ENCODE measurements at regions of chr2 and their contacts with region 1.

Region 1: DNA sequence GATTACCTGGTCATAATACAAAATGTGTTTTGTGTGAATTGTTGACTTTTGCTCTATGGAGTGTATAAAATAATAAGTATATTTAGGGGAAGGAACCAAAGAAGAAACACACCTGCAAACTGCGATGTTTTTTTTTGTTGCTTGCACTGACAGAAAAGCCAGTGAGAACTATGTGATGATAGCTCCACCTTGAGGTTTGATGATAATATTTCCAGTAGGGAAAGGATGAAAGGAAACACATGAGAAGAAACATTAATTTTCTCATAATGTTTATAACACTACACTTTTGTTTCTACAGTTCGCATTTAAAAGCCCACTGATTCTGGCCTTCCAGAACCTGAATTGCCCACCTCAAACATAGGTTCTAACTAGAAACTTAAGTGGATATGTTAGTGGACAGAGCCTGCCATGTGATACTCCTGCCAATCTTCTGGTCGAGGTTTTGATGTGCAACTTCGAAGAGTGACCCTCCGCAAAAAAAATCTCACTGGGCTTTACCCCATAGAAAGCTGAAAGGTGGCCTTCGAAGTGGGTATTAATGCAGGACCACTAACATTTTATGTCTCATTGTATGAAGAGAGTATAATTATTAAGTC is 476.4 kb upstream of the SPHKAP start:
- DNase-seq: peak in 1 of 2 experiments; percentile 28
- H3K4me3 ChIP-seq: no peak overlapping the region
- H3K4me1 ChIP-seq: no peaks in the 10 kb centered on the region
- H3K27me3 ChIP-seq: 0 out of 2 replicates have a peak, but pooled peaks cover 3% of the 10 kb centered on the region

Region 2: GRCh38 chr2:227939271-227940027 is 718.5 kb before region 1 on chr2:
- in situ Hi-C with region 1: loop called (anchors 25 kb)
- DNase-seq: peak; percentile 61 to 62
- H3K4me3 ChIP-seq: no peak overlapping the region
- H3K4me1 ChIP-seq: no peaks in the 10 kb centered on the region
- H3K27me3 ChIP-seq: no peaks in the 10 kb centered on the region

Region 3: DNA sequence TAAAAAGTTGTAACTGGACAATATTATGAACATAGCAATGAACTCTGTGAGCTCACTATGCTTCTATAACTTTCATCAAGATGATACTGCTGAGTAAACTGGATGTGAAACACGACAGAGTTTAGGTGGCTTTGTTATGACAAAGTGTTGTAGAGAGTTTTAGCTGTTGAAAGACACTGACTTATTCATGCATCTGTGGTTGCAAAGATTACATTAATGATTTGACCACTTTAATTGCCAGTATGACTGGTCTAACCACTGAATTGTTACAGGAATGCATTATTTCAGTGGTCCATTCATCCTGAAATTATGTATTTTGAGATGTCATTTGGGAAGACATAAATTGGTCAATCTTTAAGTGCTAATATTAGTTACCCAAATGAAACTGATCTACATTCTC is 594.3 kb before region 1 on chr2:
- in situ Hi-C with region 1: loop called (anchors 25 kb)
- DNase-seq: no peak
- H3K4me3 ChIP-seq: no peak overlapping the region
- H3K4me1 ChIP-seq: no peaks in the 10 kb centered on the region
- H3K27me3 ChIP-seq: no peaks in the 10 kb centered on the region

Region 4: DNA sequence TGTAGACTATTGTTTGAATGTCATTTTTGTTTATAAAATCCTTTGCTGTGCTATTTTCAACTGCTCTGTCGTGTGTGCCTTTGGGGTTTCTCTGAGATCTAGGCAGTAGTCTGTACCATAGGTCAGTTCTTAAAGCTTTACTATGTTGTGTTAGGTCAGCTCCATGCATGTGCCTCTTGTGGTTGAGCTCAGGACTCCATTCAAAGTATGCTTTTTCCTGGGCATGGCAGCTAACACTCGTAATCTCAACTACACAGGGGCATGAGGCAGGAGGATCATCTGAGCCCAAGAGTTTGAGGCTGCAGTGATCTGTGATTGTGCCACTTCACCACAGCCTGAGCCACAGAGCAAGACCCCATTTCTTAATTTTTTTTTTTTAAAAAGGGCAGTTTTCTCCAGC is 302.0 kb before region 1 on chr2:
- in situ Hi-C with region 1: no loop called
- DNase-seq: no peak
- H3K4me3 ChIP-seq: no peak overlapping the region
- H3K4me1 ChIP-seq: no peaks in the 10 kb centered on the region
- H3K27me3 ChIP-seq: no peaks in the 10 kb centered on the region